ENCODE measurements at regions of chr18 and their contacts with region 1.

Region 1: DNA sequence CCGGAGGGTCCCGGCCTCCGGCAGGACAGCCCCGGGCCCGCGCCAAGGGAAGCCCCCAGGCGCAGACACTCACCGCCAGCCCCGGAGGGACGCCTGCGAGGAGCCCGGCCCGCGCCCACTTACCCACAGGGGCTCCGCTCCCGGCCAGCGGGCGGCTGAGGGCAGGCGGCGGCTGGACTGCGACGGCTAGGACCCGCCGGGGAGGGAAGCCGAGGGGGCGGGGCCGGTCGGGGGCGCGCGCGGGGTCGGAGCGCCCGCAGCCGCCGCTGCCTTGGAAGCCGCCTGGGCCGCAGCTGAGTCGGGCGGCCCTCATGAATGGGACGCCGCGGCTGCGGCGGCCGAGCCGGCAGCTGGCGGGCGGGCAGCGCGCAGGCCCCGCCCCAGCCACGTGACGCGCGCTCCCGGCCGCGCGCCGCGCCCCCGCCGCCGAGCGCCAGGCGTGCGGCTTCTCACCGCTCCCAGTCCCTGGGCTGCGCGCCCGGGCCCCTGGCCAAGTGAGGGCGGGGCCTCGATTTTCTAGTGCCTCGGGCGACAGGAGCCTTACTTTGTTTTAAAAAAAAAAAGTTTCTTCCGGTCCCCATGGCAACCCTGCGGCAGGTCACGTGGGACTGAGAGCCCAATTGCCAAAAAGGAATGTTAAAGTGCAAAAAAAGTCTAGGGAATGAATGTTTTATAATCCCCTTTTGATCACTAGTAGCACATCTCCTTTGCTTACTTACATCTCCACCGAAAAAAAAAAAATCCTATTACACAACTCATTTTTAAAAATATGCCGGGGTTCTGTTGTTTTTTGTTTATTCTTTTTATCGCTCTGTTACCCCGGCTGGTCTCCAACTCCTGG is at the start of gene LPIN2:
- DNase-seq: peak; percentile 99
- H3K4me3 ChIP-seq: peak within 1 kb of the TSS; percentile 69 to 100 (median 88)
- H3K27ac ChIP-seq: peak within 1 kb of the TSS; percentile 97 to 99 (median 98)
- H3K4me1 ChIP-seq: peaks cover 30 to 74% (median 71%) of the 10 kb centered on the region in 4 donors
- H3K27me3 ChIP-seq: no peaks in the 10 kb centered on the region
- CTCF ChIP-seq: no peak
- EP300 ChIP-seq: no peak
- POLR2A ChIP-seq: no peak
- total RNA-seq, gene LPIN2: 15.4 to 26.9 (median 24.8) TPM

Region 2: DNA sequence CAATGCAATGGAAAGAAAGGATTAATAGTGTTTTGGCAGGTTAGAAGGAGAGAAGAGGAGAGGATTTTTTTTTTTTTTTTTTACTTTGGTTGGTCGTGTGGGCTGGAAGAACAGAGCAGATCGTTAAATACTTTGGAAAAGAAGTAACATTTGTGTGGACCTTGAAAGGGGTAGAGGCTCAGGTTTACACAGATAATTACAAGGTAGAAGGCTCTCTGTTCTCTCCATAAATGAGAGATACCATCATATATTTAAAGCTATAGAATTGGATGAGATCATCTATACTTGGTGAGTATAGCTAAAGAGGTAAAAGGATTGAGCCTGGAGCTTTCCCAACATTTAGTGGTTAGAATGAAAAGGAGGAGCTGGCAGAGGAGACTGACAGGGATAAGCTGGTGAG is 308.6 kb before region 1 on chr18:
- intact Hi-C with region 1: no loop called
- DNase-seq: no peak
- H3K4me3 ChIP-seq: no peak overlapping the region
- H3K27ac ChIP-seq: no peak overlapping the region
- H3K4me1 ChIP-seq: no peaks in the 10 kb centered on the region
- H3K27me3 ChIP-seq: no peaks in the 10 kb centered on the region
- CTCF ChIP-seq: no peak
- EP300 ChIP-seq: no peak
- POLR2A ChIP-seq: no peak

Region 3: GRCh38 chr18:2874765-2875164 is 138.4 kb before region 1 on chr18:
- intact Hi-C with region 1: no loop called
- DNase-seq: no peak
- H3K4me3 ChIP-seq: no peak overlapping the region
- H3K27ac ChIP-seq: no peak overlapping the region
- H3K4me1 ChIP-seq: peaks cover 5 to 16% (median 11%) of the 10 kb centered on the region in 4 donors
- H3K27me3 ChIP-seq: no peaks in the 10 kb centered on the region
- CTCF ChIP-seq: no peak
- EP300 ChIP-seq: no peak
- POLR2A ChIP-seq: no peak

Region 4: GRCh38 chr18:3245853-3246634 is 232.9 kb after region 1 on chr18:
- intact Hi-C with region 1: loop called (anchors 5 kb)
- DNase-seq: peak; percentile 97
- H3K4me3 ChIP-seq: peak overlapping the region; percentile 87 to 98 (median 94)
- H3K27ac ChIP-seq: peak overlapping the region; percentile 99 to 100 (median 99)
- H3K4me1 ChIP-seq: peaks cover 18 to 55% (median 49%) of the 10 kb centered on the region in 4 donors
- H3K27me3 ChIP-seq: no peaks in the 10 kb centered on the region
- CTCF ChIP-seq: peak; percentile 95 to 99 (median 95)
- EP300 ChIP-seq: no peak
- POLR2A ChIP-seq: no peak